Endothelial cell of umbilical vein (primary cell): ENCODE measurements at regions of chr12 and their contacts with region 1.

Region 1: DNA sequence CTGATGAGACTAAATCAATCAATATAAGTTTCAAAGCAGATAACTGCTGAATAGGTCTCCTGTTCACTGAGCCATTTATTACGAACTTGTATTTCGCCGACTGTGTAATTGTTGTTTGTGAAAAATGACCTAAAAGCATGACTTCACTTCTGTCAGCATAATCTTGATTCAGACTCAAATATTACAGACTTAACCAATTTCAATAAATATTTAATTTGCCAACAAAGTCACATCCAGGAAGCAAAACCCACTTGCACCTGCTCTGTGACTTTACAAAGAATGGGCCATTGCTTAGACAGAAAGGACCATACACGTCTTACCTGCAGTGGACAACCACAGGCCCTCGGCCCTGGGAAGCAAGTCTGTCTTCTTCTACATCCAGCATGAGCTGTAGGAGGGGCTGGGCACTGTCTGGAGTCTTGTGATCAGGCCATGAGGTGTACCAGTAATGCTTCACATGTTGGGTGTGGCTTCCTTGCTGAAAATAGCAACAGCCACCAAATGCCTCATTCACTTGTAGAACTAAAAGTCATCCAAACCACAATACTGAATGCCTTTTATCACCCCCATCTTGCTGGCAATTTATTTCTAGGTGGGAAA is 23.5 kb upstream of the PTPRB start:
- DNase-seq: peak; percentile 57
- H3K4me3 ChIP-seq: no peak overlapping the region
- H3K27ac ChIP-seq: peak overlapping the region; percentile 97
- H3K4me1 ChIP-seq: peaks cover 40% of the 10 kb centered on the region
- H3K27me3 ChIP-seq: no peaks in the 10 kb centered on the region
- CTCF ChIP-seq: no peak
- POLR2A ChIP-seq: no peak

Region 2: GRCh38 chr12:70671698-70672097 is 11.0 kb after region 1 on chr12:
- CTCF ChIA-PET with region 1: interaction called, 5 read pairs
- POLR2A ChIA-PET with region 1: no interaction called
- dilution Hi-C with region 1: no loop called
- intact Hi-C with region 1: loop called (anchors 1 kb)
- DNase-seq: no peak
- H3K4me3 ChIP-seq: no peak overlapping the region
- H3K27ac ChIP-seq: peak overlapping the region; percentile 39
- H3K4me1 ChIP-seq: peaks cover 12% of the 10 kb centered on the region
- H3K27me3 ChIP-seq: no peaks in the 10 kb centered on the region
- CTCF ChIP-seq: no peak
- POLR2A ChIP-seq: no peak

Region 3: GRCh38 chr12:71349950-71350349 is 689.2 kb after region 1 on chr12:
- CTCF ChIA-PET with region 1: no interaction called
- POLR2A ChIA-PET with region 1: no interaction called
- dilution Hi-C with region 1: no loop called
- intact Hi-C with region 1: no loop called
- DNase-seq: no peak
- H3K4me3 ChIP-seq: no peak overlapping the region
- H3K27ac ChIP-seq: no peak overlapping the region
- H3K4me1 ChIP-seq: no peaks in the 10 kb centered on the region
- H3K27me3 ChIP-seq: no peaks in the 10 kb centered on the region
- CTCF ChIP-seq: no peak
- POLR2A ChIP-seq: no peak